PC-9 (cell line): ENCODE measurements at regions of chr16 and their contacts with region 1.

Region 1: DNA sequence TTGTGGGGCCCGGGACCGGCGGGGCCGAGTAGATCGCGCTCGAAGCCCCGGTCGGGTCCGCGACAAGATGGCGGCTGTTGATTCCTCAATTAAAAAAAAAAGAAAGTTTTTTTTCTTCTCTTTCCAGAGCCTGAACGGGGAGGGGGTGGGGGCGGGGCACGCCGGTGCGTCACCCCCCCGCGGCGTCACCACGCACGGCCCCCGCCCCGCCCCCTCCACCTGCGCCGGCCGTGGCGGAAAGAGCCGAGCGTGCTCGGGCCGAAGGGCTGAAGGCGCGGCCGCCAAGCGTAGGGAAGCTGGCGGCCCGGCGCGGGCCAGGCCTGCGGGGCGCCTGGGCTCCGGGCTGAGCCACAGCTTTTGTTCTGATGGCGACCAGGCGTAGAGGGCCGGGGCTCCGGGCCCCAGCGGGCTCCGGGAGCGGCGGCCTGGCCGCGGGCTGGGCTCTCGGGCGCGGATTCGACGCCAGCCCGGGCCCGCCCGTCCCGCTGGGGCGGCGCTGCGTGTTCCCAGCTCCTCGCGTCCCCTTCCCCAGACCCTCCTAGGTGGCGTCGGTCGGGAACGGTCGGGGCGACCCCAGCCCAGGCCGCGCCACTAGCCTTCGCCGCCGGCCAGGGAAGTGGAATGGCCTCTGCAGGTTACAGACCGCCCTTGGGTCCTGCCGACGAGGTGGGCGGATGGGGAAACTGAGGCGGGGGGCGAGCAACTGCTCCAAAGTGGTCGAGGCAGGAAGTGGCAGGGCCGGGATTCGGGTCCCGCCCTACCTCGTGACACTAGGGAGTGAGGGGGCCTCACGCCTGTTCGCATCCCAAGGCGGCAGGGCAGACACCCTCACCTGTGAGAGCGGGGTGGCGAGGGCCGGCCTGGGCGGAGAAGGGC is at the start of gene CREBBP:
- DNase-seq: peak; percentile 64 to 91
- H3K4me3 ChIP-seq: peak within 1 kb of the TSS; percentile 92
- H3K27ac ChIP-seq: peak within 1 kb of the TSS; percentile 26; the same call in 1 of the 2 replicates
- H3K4me1 ChIP-seq: peaks cover 17% of the 10 kb centered on the region
- H3K27me3 ChIP-seq: no peaks in the 10 kb centered on the region
- CTCF ChIP-seq: no peak
- total RNA-seq, gene CREBBP: 70.5 and 74.9 TPM in 2 replicates

Region 2: GRCh38 chr16:3690470-3690928 is 190.4 kb before region 1 on chr16:
- CTCF ChIA-PET with region 1: no interaction called
- POLR2A ChIA-PET with region 1: no interaction called
- intact Hi-C with region 1: loop called (anchors 1 kb)
- DNase-seq: peak; percentile 54 to 86
- H3K4me3 ChIP-seq: no peak overlapping the region
- H3K27ac ChIP-seq: no peak overlapping the region
- H3K4me1 ChIP-seq: no peaks in the 10 kb centered on the region
- H3K27me3 ChIP-seq: no peaks in the 10 kb centered on the region
- CTCF ChIP-seq: peak; percentile 84

Region 3: GRCh38 chr16:3819746-3820724 is 60.8 kb before region 1 on chr16:
- CTCF ChIA-PET with region 1: interaction called, 12 read pairs
- POLR2A ChIA-PET with region 1: no interaction called
- intact Hi-C with region 1: no loop called
- DNase-seq: peak; percentile 43 to 46
- H3K4me3 ChIP-seq: no peak overlapping the region
- H3K27ac ChIP-seq: no peak overlapping the region
- H3K4me1 ChIP-seq: peaks cover 17% of the 10 kb centered on the region
- H3K27me3 ChIP-seq: no peaks in the 10 kb centered on the region
- CTCF ChIP-seq: no peak

Region 4: DNA sequence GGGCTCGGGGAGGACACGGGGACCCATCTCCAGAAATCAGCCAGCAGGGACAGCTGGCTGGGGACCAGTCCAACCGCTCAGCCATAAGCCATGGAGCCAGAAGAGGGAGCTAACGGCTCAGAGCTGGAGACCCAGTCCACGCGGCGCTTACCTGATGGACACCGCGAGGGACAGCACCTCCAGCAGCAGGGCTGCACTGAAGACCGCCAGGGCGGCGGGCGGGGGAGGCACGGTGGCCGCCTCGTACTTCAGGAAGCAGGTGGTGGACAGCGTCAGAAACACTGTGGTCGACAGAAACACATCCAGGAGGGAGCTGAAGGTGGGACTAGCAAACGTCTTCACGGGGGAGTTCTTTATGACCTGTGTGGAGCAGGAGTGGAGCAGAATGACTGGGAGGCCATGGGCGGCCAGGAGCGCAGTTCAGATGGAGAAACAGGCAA is 102.2 kb after region 1 on chr16:
- CTCF ChIA-PET with region 1: no interaction called
- POLR2A ChIA-PET with region 1: no interaction called
- intact Hi-C with region 1: loop called (anchors 5 kb)
- DNase-seq: peak; percentile 64 to 91
- H3K4me3 ChIP-seq: no peak overlapping the region
- H3K27ac ChIP-seq: no peak overlapping the region
- H3K4me1 ChIP-seq: no peaks in the 10 kb centered on the region
- H3K27me3 ChIP-seq: no peaks in the 10 kb centered on the region
- CTCF ChIP-seq: peak; percentile 82

Region 5: GRCh38 chr16:4183237-4184036 is 302.6 kb after region 1 on chr16:
- CTCF ChIA-PET with region 1: no interaction called
- POLR2A ChIA-PET with region 1: no interaction called
- intact Hi-C with region 1: loop called (anchors 5 kb)
- DNase-seq: peak; percentile 92 to 97
- H3K4me3 ChIP-seq: peak overlapping the region; percentile 80
- H3K27ac ChIP-seq: peak overlapping the region; percentile 95
- H3K4me1 ChIP-seq: peaks cover 23% of the 10 kb centered on the region
- H3K27me3 ChIP-seq: no peaks in the 10 kb centered on the region
- CTCF ChIP-seq: no peak